Calu3 (cell line): ENCODE measurements at regions of chr16 and their contacts with region 1.

Region 1: GRCh38 chr16:14300705-14301168 is 229.6 kb downstream of the MRTFB start:
- DNase-seq: peak; percentile 76
- H3K4me3 Mint-ChIP-seq: peak overlapping the region; percentile 82
- H3K27ac Mint-ChIP-seq: peak overlapping the region; percentile 76
- H3K4me1 Mint-ChIP-seq: peaks cover 15% of the 10 kb centered on the region
- H3K27me3 Mint-ChIP-seq: no peaks in the 10 kb centered on the region
- CTCF ChIP-seq: peak; percentile 62

Region 2: DNA sequence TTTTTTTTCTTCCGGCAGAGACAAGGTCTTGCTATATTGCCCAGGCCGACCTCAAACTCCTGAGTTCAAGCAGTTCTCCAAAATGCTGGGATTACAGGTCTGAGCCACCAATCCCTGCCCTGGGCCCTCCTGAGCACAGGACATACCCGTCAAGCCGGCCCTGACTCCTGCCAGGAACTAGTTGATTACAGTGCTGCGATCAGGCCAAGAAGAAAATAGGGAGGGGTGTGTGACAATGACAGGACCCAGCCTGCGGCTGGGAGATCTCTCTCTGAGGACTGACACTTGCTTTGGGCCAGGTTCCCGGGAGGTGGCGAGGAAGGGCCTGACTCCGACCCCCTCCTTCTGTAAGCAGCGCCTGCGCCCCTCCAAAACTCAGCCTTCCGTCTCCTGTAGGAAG is 47.0 kb after region 1 on chr16:
- CTCF ChIA-PET with region 1: no interaction called
- intact Hi-C with region 1: no loop called
- DNase-seq: no peak
- H3K4me3 Mint-ChIP-seq: no peak overlapping the region
- H3K27ac Mint-ChIP-seq: no peak overlapping the region
- H3K4me1 Mint-ChIP-seq: no peaks in the 10 kb centered on the region
- H3K27me3 Mint-ChIP-seq: peaks cover 10% of the 10 kb centered on the region
- CTCF ChIP-seq: no peak

Region 3: GRCh38 chr16:14364386-14365204 is 63.9 kb after region 1 on chr16:
- CTCF ChIA-PET with region 1: no interaction called
- intact Hi-C with region 1: loop called (anchors 10 kb)
- DNase-seq: peak; percentile 74
- H3K4me3 Mint-ChIP-seq: peak overlapping the region; percentile 60
- H3K27ac Mint-ChIP-seq: peak overlapping the region; percentile 65
- H3K4me1 Mint-ChIP-seq: peaks cover 14% of the 10 kb centered on the region
- H3K27me3 Mint-ChIP-seq: peaks cover 4% of the 10 kb centered on the region
- CTCF ChIP-seq: no peak